PC-3 (cell line): ENCODE measurements at regions of chr11 and their contacts with region 1.

Region 1: GRCh38 chr11:12653725-12654124 is 20.5 kb upstream of the TEAD1 start:
- DNase-seq: peak; percentile 51
- ATAC-seq: peak; percentile 73
- H3K4me3 ChIP-seq: no peak overlapping the region
- H3K27ac ChIP-seq: no peak overlapping the region
- H3K4me1 ChIP-seq: no peaks in the 10 kb centered on the region
- H3K27me3 ChIP-seq: no peaks in the 10 kb centered on the region
- CTCF ChIP-seq: peak; percentile 14; the same call in 1 of the 2 replicates

Region 2: GRCh38 chr11:12565406-12565805 is 88.3 kb before region 1 on chr11:
- CTCF ChIA-PET with region 1: no interaction called
- POLR2A ChIA-PET with region 1: interaction called, 14 read pairs
- intact Hi-C with region 1: no loop called
- DNase-seq: no peak
- ATAC-seq: no peak
- H3K4me3 ChIP-seq: no peak overlapping the region
- H3K27ac ChIP-seq: no peak overlapping the region
- H3K4me1 ChIP-seq: no peaks in the 10 kb centered on the region
- H3K27me3 ChIP-seq: no peaks in the 10 kb centered on the region
- CTCF ChIP-seq: no peak

Region 3: GRCh38 chr11:12862696-12863469 is 209.2 kb after region 1 on chr11:
- CTCF ChIA-PET with region 1: no interaction called
- POLR2A ChIA-PET with region 1: no interaction called
- intact Hi-C with region 1: no loop called
- DNase-seq: no peak
- ATAC-seq: no peak
- H3K4me3 ChIP-seq: no peak overlapping the region
- H3K27ac ChIP-seq: no peak overlapping the region
- H3K4me1 ChIP-seq: no peaks in the 10 kb centered on the region
- H3K27me3 ChIP-seq: no peaks in the 10 kb centered on the region
- CTCF ChIP-seq: no peak